CD8-positive, alpha-beta memory T cell (primary cell): ENCODE measurements at regions of chr15 and their contacts with region 1.

Region 1: GRCh38 chr15:80070840-80071239 is 11.4 kb downstream of the ZFAND6 start:
- DNase-seq: no peak
- H3K4me3 ChIP-seq: no peak overlapping the region
- H3K4me3 Mint-ChIP-seq: no peak overlapping the region
- H3K27ac ChIP-seq: peak overlapping the region; percentile 25
- H3K27ac Mint-ChIP-seq: no peak overlapping the region
- H3K4me1 ChIP-seq: peaks cover 25% of the 10 kb centered on the region
- H3K4me1 Mint-ChIP-seq: peaks cover 56 to 88% (median 81%) of the 10 kb centered on the region in 3 donors
- H3K27me3 ChIP-seq: no peaks in the 10 kb centered on the region
- H3K27me3 Mint-ChIP-seq: no peaks in the 10 kb centered on the region

Region 2: GRCh38 chr15:80093854-80094418 is 23.1 kb after region 1 on chr15:
- CTCF ChIA-PET with region 1: no interaction called
- POLR2A ChIA-PET with region 1: interaction called, 11 read pairs
- DNase-seq: no peak
- H3K4me3 ChIP-seq: no peak overlapping the region
- H3K4me3 Mint-ChIP-seq: no peak overlapping the region
- H3K27ac ChIP-seq: no peak overlapping the region
- H3K27ac Mint-ChIP-seq: peak overlapping the region in 1 of 8 donors; percentile 26
- H3K4me1 ChIP-seq: peaks cover 4% of the 10 kb centered on the region
- H3K4me1 Mint-ChIP-seq: peaks cover 40 to 65% (median 45%) of the 10 kb centered on the region in 3 donors
- H3K27me3 ChIP-seq: no peaks in the 10 kb centered on the region
- H3K27me3 Mint-ChIP-seq: no peaks in the 10 kb centered on the region

Region 3: GRCh38 chr15:80141916-80142598 is 71.2 kb after region 1 on chr15:
- CTCF ChIA-PET with region 1: no interaction called
- POLR2A ChIA-PET with region 1: no interaction called
- DNase-seq: no peak
- H3K4me3 ChIP-seq: no peak overlapping the region
- H3K4me3 Mint-ChIP-seq: no peak overlapping the region
- H3K27ac ChIP-seq: no peak overlapping the region
- H3K27ac Mint-ChIP-seq: no peak overlapping the region
- H3K4me1 ChIP-seq: no peaks in the 10 kb centered on the region
- H3K4me1 Mint-ChIP-seq: no peaks in the 10 kb centered on the region
- H3K27me3 ChIP-seq: no peaks in the 10 kb centered on the region
- H3K27me3 Mint-ChIP-seq: peaks cover 0 to 1% of the 10 kb centered on the region in 2 donors

Region 4: GRCh38 chr15:80343554-80343992 is 272.7 kb after region 1 on chr15:
- CTCF ChIA-PET with region 1: no interaction called
- POLR2A ChIA-PET with region 1: no interaction called
- DNase-seq: no peak
- H3K4me3 ChIP-seq: no peak overlapping the region
- H3K4me3 Mint-ChIP-seq: no peak overlapping the region
- H3K27ac ChIP-seq: no peak overlapping the region
- H3K27ac Mint-ChIP-seq: no peak overlapping the region
- H3K4me1 ChIP-seq: no peaks in the 10 kb centered on the region
- H3K4me1 Mint-ChIP-seq: no peaks in the 10 kb centered on the region
- H3K27me3 ChIP-seq: peaks cover 3% of the 10 kb centered on the region
- H3K27me3 Mint-ChIP-seq: peaks cover 20 to 35% of the 10 kb centered on the region in 2 donors